ENCODE measurements at regions of chr9 and their contacts with region 1.

Region 1: GRCh38 chr9:124774129-124774978 is 2.6 kb upstream of the OLFML2A start:
- DNase-seq: peak; percentile 89
- ATAC-seq: peak; percentile 34

Region 2: GRCh38 chr9:124639637-124640036 is 134.7 kb before region 1 on chr9:
- intact Hi-C with region 1: no loop called
- DNase-seq: no peak
- ATAC-seq: no peak

Region 3: DNA sequence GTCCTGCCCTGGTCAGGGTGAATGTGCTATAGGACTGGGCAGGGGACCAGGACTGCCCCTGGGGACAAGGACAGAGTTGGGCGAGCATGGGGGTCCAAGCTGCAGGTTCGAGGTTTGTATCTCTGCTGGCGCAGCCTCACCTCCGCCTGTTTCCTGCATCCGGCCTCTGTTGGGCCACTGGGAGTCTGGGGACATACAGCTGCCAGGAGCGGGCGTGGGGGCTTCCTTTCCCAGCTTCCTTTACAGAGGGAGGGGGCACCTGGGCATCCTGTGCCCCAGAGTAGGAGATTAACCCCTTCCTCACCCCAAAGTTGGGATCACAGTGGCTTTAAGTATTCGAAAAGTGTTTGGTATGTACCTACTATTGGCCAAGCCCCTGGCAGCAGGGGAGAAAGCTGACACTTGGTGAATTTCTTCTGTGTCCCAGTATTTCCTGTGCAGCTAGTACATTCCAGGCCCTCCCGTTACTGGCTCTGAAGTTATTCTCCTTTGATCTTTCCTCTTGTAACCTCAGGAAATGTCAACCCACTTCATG is 21.6 kb after region 1 on chr9:
- intact Hi-C with region 1: loop called (anchors 2 kb)
- DNase-seq: peak; percentile 59
- ATAC-seq: peak; percentile 14

Region 4: DNA sequence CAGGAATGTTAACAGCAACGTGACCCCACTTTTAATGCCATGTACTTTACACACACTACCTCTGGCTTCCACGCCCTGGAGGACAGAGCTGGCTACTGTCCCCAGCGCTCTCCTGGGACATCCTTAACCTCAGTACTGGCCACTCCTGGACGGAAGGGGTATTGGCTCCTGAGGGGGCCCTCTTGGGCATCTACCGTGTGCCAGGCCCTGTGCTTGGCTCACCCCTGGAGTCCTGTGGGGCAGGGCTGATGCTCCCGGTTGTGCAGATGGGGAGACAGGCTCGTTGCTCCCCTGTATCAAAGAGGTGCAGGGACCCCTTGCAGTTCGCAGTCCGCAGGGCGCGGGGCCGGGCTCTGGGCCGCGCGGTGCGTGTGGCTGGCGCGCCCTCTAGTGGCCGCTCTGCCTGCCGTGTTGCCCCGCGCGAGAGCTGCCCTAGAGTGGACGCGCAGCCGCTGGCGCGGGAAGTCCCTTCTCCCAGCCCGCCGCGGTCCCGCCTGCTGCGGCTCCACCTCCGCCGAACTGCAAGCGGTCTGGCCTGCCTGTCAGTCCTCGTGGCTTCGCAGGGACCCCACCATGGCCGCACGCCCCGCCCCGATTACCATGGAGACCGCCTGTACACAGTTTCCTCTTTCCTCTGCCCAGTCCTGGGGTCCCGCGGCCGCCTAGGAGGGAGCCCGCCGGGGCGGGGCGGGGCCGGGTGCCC is 78.6 kb after region 1 on chr9 and contains the start of gene WDR38:
- intact Hi-C with region 1: loop called (anchors 1 kb)
- DNase-seq: peak; percentile 91
- ATAC-seq: peak; percentile 91
- total RNA-seq, gene WDR38: not detected